ENCODE measurements at regions of chr1 and their contacts with region 1.

Region 1: DNA sequence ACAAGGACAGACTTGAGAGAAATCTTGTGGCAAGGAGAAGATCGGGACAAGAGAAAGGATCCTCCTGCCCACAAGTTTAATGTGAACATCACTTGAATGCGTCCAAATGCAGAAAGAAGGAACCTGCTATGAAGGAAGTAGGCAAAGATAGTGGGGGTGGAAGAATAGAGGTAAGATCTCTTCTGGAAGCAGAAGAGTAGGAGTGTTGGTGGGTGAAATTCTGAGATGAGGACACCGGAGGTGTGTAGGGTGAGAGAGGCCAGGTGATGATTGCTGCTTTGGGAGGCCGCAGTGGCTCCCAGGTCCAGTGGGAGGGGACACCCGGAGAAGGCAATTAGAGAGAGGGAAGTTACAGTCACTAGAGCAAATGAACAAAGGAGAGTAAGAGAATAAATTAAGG is 6.8 kb downstream of the RYR2 start:
- DNase-seq: no peak
- CTCF ChIP-seq: no peak

Region 2: GRCh38 chr1:237016626-237017025 is 32.2 kb before region 1 on chr1:
- CTCF ChIA-PET with region 1: no interaction called
- POLR2A ChIA-PET with region 1: no interaction called
- DNase-seq: no peak
- CTCF ChIP-seq: no peak

Region 3: DNA sequence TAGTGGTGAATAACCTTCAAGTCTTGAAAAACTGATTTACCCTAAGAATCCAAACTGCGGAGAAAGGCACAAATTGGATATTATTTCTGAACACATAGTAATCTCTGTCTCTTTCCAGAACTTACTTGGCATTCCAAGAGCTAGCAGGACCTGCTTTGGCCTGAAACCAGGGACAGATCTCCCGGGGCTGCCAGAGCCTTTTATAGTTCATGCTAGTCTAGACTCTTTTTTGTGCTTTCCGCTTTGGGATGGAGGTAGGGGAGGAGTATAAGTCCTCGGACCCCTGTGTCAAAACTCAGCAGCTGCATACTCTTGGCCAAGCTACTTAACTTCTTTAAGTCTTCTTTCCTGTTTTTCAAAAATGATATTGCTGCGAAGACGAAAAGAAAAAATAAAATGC is 10.6 kb before region 1 on chr1:
- CTCF ChIA-PET with region 1: interaction called, 10 read pairs
- POLR2A ChIA-PET with region 1: no interaction called
- DNase-seq: no peak
- CTCF ChIP-seq: no peak

Region 4: GRCh38 chr1:237084258-237085077 is 35.7 kb after region 1 on chr1:
- CTCF ChIA-PET with region 1: no interaction called
- POLR2A ChIA-PET with region 1: no interaction called
- DNase-seq: no peak
- CTCF ChIP-seq: no peak

Measured in GM10248 (cell line).